Activated T-helper 2 cell treated with anti-CD3 and anti-CD28 coated beads, Interferon-gamma antibody, Interleukin-2, Interleukin-4, amounts not matched to agents 10 μg/mL and 5 μg/mL and 100 μg/mL, durations not matched to agents 14 hours and 24 hours and 36 hours (primary cell): ENCODE measurements at regions of chr7 and their contacts with region 1.

Region 1: GRCh38 chr7:54758702-54759592 is at the start of gene SEC61G:
- DNase-seq: peak; percentile 94
- H3K4me3 Mint-ChIP-seq: peak within 1 kb of the TSS; percentile 100
- H3K27ac Mint-ChIP-seq: peak within 1 kb of the TSS; percentile 97
- H3K4me1 Mint-ChIP-seq: peaks cover 32% of the 10 kb centered on the region
- H3K27me3 Mint-ChIP-seq: peaks cover 19% of the 10 kb centered on the region
- total RNA-seq, gene SEC61G: 194 and 200 TPM in 2 replicates

Region 2: DNA sequence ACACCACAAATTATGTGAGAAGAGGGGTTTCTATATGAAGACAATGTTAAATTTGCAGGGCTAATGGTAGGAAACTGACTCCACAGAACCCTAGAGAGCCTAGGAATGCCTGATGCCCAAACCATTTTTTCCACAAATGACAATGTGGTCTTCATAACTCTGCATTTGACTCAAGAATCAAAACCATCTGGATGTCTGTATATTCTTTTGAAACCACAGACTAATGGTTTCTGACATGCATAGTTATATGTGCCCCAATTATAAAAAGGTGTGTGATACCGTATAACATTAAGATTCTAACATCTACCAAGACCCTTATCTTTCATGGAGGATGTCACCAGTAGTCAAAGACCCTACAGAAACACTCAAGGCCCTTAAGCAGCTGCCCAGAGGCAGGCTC is 20.2 kb before region 1 on chr7:
- intact Hi-C with region 1: no loop called
- DNase-seq: no peak
- H3K4me3 Mint-ChIP-seq: no peak overlapping the region
- H3K27ac Mint-ChIP-seq: no peak overlapping the region
- H3K4me1 Mint-ChIP-seq: peaks cover 2% of the 10 kb centered on the region
- H3K27me3 Mint-ChIP-seq: no peaks in the 10 kb centered on the region

Region 3: DNA sequence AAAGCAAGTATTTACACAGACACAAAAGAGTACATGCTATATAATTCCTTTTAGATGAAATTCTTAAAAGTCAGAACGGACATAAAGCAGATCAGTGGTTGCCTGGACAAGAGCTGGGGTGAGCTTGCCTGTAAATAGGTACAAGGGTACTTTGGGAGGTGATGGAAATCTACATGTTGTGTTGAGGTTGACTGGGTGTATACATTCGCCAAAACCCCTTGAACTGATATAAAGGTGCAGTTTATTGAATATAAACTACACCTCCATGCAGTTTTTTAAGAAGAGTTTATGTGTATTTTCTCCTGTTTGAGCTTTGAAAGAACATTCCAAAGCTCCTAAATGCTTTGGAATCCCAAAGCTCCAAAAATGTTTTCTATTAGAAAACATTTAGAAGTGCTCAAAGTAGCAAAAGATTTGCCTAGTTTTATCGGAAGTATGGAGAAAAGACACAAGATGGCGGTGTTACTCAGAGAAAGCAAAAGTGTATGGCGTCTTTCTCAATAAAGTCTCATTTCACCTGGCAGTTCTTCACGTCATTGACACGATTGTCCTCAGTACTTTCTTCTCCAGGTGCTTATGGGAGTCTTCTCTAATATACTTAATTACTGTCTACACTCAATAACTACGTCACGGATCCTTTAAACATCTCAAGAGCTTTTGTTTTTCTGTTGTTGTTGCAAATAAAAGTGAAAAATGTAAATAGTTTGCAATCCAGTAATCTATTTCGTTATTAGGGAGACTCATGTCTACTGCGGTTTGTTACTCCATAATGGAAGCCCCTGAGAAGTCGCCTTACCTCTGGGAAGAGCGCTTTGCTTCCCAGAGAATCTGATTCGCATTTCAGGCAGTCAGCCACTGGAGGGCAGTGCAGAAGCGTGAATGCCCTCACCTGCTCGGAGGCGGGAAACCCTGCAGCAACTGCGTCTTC is 14.8 kb after region 1 on chr7:
- intact Hi-C with region 1: loop called (anchors 1 kb)
- DNase-seq: peak; percentile 46
- H3K4me3 Mint-ChIP-seq: peak overlapping the region; percentile 69
- H3K27ac Mint-ChIP-seq: no peak overlapping the region
- H3K4me1 Mint-ChIP-seq: peaks cover 4% of the 10 kb centered on the region
- H3K27me3 Mint-ChIP-seq: peaks cover 25% of the 10 kb centered on the region

Region 4: DNA sequence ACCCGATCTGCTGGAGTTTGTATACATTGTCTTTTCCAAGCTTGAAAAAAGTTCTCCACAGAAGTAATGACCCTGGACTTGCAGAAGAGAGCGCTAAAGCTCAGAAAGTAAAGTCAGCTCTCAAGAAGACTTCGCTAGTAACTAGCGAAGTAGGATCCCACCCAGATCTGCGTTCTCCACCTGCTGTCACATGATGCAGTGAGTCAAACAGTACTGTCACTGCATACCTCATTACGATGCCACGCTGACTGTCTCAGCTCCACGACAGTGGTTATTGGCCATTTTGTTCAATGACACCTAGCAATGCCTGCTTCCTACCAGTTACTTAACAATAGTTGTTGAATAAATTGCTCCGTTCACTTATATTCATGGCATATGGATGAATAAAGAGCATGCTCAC is 29.7 kb after region 1 on chr7:
- intact Hi-C with region 1: loop called (anchors 2 kb)
- DNase-seq: no peak
- H3K4me3 Mint-ChIP-seq: no peak overlapping the region
- H3K27ac Mint-ChIP-seq: no peak overlapping the region
- H3K4me1 Mint-ChIP-seq: peaks cover 5% of the 10 kb centered on the region
- H3K27me3 Mint-ChIP-seq: peaks cover 8% of the 10 kb centered on the region

Region 5: DNA sequence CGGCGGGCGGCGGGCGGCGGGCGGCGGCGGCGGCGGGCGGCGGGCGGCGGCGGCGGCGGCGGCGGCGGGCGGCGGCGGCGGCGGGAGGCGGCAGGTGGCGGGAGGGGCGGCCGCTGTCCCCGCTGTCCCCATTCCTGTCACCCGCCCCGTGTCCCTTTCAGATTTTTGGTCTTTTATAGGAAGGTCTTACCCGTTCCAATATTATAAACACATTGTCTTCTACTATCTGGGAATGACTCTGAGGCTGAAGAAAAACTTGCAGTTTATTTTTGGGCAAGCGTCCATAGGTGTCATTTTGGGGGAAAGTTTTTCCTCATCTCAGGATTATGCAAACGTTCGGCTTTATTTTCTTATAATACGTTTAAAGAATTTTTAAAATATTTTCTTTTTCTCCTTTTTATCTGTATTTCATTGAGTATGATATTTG is 1128.9 kb after region 1 on chr7:
- intact Hi-C with region 1: loop called (anchors 5 kb)
- DNase-seq: no peak
- H3K4me3 Mint-ChIP-seq: peak overlapping the region; percentile 81
- H3K27ac Mint-ChIP-seq: peak overlapping the region; percentile 74
- H3K4me1 Mint-ChIP-seq: peaks cover 4% of the 10 kb centered on the region
- H3K27me3 Mint-ChIP-seq: no peaks in the 10 kb centered on the region

Region 6: DNA sequence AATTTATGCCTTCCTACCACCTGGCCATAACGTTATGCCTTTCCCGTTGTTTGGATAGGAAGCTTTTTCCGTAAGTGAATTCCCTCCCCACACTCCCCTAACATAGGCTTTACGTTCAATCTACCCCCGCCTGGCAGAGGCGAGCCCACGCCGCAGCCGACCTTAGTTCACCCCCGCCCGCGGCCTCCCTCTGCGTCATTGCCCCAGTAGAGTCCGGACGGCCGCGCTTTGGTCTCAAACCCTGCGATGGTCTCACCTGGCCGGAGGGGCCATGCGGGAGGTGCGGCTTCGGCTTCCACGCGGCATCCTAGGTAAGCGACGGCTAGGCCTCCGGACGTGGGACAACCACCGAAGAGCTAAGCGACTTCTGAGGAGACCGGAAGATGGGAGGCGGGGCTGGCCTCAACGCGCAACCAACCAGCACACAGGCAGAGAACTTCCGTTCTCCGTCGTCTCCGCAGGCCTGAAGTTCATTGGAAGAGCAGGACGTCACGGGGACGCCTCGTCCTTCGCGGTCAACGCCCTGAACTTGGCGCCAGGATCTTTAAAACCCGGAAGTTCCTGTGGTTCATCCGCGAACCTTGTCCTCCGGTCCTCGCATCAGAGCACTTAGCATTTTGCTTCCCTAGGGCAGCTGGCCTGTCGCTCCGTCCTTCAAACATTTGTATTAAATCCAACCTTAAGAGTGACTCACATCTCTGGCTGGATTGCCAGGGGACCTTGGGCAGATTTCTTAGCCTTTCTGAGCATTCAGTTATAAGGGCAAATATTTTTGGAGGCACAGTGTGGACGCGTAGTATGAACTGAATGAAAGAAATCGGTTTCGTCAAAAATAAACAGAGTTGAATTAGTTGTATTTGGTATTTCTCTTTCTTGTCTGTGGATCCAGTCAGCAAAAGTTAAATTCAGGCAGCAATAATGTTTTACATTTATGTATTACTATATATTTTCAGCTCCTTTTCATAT is 1347.4 kb after region 1 on chr7 and contains the start of gene CHCHD2:
- intact Hi-C with region 1: loop called (anchors 1 kb)
- DNase-seq: peak; percentile 93
- H3K4me3 Mint-ChIP-seq: peak within 1 kb of the TSS; percentile 99
- H3K27ac Mint-ChIP-seq: peak within 1 kb of the TSS; percentile 99
- H3K4me1 Mint-ChIP-seq: peaks cover 21% of the 10 kb centered on the region
- H3K27me3 Mint-ChIP-seq: no peaks in the 10 kb centered on the region
- total RNA-seq, gene CHCHD2: 660 TPM in 2 replicates